Activated B cell treated with CpG ODN at 0.5 μM for 24 hours (primary cell): ENCODE measurements at regions of chr1 and their contacts with region 1.

Region 1: DNA sequence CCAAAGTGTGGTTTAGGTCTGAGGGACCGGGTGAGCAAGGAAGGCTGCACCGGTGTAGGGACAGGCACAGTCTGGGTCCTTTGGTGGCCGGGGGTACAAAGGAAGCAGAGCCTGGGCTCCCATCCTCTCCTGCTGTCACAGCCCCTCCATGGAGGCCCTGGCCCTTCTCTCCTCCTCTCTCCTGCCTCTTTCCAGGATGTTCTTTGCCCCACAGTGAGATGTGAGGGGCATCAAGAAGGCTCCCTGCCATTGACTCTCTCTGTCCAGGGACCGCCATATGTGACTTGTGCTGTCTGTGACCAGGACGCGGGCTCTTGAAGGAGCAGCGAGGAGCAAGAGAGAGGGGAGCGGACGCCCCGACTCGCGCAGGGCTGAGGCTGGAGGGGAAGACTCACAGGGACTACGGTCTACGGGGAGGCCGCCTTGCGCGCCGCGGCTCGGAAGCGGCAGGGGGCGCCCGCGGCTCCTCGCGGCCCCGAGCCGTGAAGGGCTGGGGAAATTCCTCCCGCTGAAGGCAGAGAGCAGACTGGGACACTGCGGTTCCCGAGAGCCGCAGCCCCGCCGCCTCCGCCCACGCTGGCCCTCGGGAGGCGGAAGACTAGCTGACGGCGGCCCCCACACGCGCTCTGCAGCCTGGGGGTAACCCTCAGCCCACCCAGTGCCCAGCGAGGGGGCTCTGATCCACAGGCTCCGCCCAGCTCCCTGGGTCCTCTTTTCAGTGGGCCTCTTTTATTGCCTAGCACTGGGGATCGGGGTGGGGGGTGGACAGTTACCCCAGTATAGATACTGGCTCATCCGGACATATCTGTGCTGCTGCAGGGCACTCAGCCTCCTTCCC is 40.8 kb downstream of the MAB21L3 start:
- DNase-seq: peak; percentile 76
- ATAC-seq: peak; percentile 98
- H3K4me3 Mint-ChIP-seq: peak overlapping the region; percentile 66
- H3K27ac Mint-ChIP-seq: peak overlapping the region; percentile 19
- H3K4me1 Mint-ChIP-seq: peaks cover 3% of the 10 kb centered on the region
- H3K27me3 Mint-ChIP-seq: peaks cover 4% of the 10 kb centered on the region
- CTCF ChIP-seq: peak; percentile 38

Region 2: GRCh38 chr1:115332813-115333608 is 818.9 kb before region 1 on chr1:
- CTCF ChIA-PET with region 1: no interaction called
- POLR2A ChIA-PET with region 1: no interaction called
- intact Hi-C with region 1: no loop called
- DNase-seq: no peak
- ATAC-seq: no peak
- H3K4me3 Mint-ChIP-seq: no peak overlapping the region
- H3K27ac Mint-ChIP-seq: no peak overlapping the region
- H3K4me1 Mint-ChIP-seq: no peaks in the 10 kb centered on the region
- H3K27me3 Mint-ChIP-seq: peaks cover 13% of the 10 kb centered on the region
- CTCF ChIP-seq: no peak

Region 3: DNA sequence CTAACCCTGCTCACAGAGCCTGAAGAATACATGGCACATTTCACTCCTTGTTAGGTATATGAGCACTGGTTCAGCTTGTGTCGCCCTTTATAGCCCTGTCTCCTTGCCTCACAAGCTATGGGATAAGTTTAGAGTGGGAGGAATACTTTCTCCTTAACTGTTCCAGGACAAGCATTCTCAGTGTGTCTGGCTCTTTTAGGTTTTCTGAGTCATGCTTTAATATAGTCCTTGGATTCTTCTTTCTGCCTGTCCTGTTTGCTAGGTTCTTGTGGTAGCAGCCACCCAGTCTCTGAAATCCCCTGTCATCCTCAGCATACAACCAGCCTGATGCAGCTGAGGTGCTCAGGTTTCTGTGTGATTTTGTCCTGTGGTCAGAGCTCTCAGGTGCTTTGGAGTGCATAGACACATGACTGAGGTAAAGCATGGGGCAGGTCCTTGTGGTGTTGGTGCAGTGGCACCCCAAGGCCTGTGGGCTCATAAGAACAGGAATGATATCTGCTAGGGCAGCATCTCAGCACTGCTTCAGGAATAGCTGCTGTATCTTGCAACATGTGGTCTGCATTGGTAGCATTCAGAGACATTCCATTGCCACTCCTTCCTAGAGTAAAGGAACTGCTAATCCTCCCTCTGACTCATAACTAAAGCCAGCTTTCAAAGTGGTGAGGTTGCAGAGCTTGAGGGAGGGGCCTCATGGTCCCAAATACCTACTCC is 369.2 kb before region 1 on chr1:
- CTCF ChIA-PET with region 1: no interaction called
- POLR2A ChIA-PET with region 1: no interaction called
- intact Hi-C with region 1: no loop called
- DNase-seq: no peak
- ATAC-seq: no peak
- H3K4me3 Mint-ChIP-seq: no peak overlapping the region
- H3K27ac Mint-ChIP-seq: no peak overlapping the region
- H3K4me1 Mint-ChIP-seq: no peaks in the 10 kb centered on the region
- H3K27me3 Mint-ChIP-seq: peaks cover 22% of the 10 kb centered on the region
- CTCF ChIP-seq: no peak

Region 4: GRCh38 chr1:116168277-116169097 is 16.5 kb after region 1 on chr1:
- CTCF ChIA-PET with region 1: interaction called, 4 read pairs
- POLR2A ChIA-PET with region 1: no interaction called
- intact Hi-C with region 1: loop called (anchors 2 kb)
- DNase-seq: peak; percentile 75
- ATAC-seq: peak; percentile 98
- H3K4me3 Mint-ChIP-seq: peak overlapping the region; percentile 83
- H3K27ac Mint-ChIP-seq: peak overlapping the region; percentile 41
- H3K4me1 Mint-ChIP-seq: peaks cover 11% of the 10 kb centered on the region
- H3K27me3 Mint-ChIP-seq: peaks cover 6% of the 10 kb centered on the region
- CTCF ChIP-seq: peak; percentile 91

Region 5: DNA sequence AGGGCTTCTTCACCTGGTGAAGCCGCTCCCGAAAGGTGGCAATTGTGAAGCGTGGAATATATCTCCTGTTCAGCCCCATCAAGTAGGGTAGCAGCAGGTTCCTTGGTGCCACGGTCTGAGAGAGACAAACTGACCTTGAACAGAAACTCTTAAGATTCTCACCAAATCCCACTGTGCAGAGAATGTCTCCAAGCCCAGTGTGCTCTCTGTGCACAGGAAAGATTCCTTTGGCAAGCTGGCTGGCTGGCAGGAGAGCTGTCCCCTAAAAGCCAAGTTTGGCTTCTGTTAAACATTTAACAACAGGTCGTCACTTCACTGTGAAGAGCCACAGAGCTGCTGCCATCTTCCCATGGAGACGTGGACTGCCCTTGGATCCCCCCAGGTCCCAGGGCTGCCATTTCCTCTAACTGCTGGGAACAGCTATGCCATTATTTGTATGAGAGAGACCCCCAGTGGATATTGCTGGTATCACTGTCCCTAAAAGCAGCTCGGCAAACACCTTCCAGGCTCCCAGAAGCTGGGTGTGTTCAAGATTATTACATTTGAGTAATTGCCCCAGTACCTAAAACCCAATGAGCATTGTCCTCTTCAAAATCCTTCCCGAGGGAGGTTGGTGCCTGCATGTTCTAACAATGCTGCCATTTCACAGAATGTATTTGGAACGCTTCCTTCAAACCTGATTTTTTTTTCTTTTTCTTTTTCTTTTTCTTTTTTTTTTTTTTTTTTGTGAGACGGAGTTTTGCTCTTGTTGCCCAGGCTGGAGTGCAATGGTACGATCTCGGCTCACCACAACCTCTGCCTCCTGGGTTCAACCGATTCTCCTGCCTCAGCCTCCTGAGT is 347.1 kb after region 1 on chr1:
- CTCF ChIA-PET with region 1: interaction called, 19 read pairs
- POLR2A ChIA-PET with region 1: no interaction called
- intact Hi-C with region 1: no loop called
- DNase-seq: no peak
- ATAC-seq: peak; percentile 68
- H3K4me3 Mint-ChIP-seq: no peak overlapping the region
- H3K27ac Mint-ChIP-seq: no peak overlapping the region
- H3K4me1 Mint-ChIP-seq: peaks cover 24% of the 10 kb centered on the region
- H3K27me3 Mint-ChIP-seq: no peaks in the 10 kb centered on the region
- CTCF ChIP-seq: no peak

Region 6: DNA sequence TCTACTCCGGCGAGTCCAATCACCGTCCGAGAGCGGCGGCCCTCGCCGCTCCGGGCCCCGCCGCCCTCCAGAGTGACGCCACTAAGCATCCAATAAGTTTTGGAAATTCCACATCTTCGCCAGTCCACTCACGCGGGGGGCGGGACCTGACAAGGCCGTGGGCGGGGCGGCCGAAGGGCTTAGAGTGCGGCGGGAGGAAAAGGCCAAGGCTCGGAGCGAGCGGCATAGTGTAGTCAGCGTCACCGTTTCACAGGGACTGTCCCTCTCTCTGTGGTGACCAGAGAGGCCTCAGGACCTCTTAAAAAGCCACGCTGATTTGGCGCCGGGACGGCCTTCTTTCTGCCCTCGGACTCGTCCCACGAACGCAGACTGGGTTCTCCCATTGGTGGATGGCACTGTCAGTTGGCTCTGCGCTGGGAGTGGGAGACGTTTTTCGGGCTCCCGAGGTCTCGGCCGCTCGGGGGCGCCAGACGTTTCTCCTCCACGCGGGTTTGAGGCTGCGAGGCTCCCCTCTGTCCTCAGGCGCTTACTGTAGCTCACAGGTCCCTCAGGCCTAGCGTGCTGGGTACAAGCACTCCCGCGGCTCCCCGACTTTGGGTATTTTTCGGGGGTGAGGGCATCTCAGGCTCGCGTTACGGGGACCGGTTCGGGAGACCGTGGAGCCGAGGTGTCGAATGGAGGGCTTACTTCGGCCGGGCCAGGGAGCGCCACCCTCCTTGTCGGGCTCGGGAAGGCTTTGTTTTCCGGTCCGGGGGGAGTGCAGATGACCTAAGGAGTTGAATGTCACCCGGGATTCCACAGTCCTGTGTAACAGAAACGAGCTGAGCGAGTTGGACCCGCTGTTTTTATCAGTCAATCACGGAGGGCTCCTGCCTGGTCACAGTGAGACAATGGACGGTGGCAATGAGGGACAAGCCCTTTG is 970.1 kb after region 1 on chr1:
- CTCF ChIA-PET with region 1: no interaction called
- POLR2A ChIA-PET with region 1: no interaction called
- intact Hi-C with region 1: loop called (anchors 5 kb)
- DNase-seq: peak; percentile 76
- ATAC-seq: peak; percentile 88
- H3K4me3 Mint-ChIP-seq: peak overlapping the region; percentile 88
- H3K27ac Mint-ChIP-seq: peak overlapping the region; percentile 54
- H3K4me1 Mint-ChIP-seq: peaks cover 13% of the 10 kb centered on the region
- H3K27me3 Mint-ChIP-seq: peaks cover 2% of the 10 kb centered on the region
- CTCF ChIP-seq: no peak